ENCODE measurements at regions of chr1 and their contacts with region 1.

Region 1: GRCh38 chr1:67500413-67500959 is 70.3 kb upstream of the SERBP1 start:
- DNase-seq: peak; percentile 89 to 94
- ATAC-seq: peak; percentile 94
- H3K4me3 ChIP-seq: no peak overlapping the region
- H3K27ac ChIP-seq: no peak overlapping the region
- H3K4me1 ChIP-seq: no peaks in the 10 kb centered on the region
- H3K27me3 ChIP-seq: no peaks in the 10 kb centered on the region

Region 2: DNA sequence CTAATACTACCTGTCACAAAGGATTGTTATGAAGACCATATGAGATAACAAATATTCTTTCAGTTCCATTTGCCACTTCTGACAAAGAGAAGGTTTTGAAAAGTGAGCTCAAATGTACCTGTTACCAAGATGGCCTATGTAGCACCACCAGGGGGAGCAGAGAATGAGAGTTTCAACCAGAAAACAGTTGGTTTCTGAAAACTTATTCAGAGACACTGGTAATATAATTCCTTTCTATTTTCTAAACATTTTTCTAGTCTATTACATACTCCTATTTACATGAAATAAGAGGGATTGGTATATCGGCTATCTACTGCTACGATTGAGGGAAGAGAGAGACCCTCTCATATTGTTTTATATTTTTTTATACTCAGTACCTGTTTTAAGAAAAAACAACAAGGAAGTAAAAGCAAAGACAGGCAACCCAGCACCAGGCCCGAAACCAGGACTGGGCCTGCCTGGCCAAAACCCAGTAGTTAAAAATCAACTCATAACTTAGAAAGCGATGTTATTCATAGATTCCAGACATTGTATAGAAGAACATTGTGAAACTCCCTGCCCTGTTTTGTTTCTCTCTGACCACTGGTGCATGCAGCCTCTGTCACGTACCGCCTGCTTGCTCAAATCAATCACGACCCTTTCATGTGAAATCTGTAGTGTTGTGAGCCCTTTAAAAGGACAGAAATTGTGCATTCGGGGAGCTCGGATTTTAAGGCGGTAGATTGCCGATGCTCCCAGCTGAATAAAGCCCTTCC is 285.9 kb before region 1 on chr1:
- intact Hi-C with region 1: loop called in 1 of 2 experiments (anchors 5 kb)
- DNase-seq: no peak
- ATAC-seq: no peak
- H3K4me3 ChIP-seq: no peak overlapping the region
- H3K27ac ChIP-seq: no peak overlapping the region
- H3K4me1 ChIP-seq: no peaks in the 10 kb centered on the region
- H3K27me3 ChIP-seq: no peaks in the 10 kb centered on the region

Region 3: DNA sequence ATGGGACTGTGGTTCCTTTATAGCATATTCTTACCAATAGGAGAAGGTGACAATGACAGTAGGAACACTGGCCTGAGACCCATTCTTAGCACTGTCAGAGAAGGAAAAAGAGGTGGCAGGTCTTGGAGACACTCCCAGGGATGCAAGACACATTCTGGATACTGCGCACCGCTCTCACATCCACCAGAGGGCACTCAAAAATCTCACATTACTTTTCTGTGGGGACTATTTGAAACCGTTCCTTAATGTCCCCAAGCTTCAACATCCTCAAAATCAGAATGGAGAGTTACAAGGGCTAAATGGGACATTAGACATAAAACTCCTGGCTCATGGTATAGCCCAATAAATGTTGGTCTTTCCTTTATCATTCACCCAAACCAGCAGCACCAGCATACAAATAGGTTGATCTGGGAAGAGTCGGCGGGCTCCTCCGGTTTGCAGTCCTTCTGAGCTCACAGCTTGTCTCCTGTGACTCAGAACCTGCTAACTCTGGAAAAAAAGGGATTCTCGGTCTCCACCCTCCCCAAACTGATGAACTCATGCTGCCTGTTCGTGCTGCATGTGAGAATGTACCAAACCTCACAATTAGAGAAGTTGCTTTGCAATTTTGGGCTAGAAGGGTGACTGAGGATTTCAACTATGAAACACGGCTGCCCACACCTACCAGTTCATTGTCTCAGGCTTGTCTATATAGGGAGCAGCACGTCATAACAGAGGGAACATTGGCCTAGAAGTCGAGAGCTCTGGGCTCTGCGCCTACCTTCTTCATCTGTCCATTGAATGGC is 152.6 kb before region 1 on chr1:
- intact Hi-C with region 1: loop called (anchors 1 to 2 kb)
- DNase-seq: no peak
- ATAC-seq: peak; percentile 77
- H3K4me3 ChIP-seq: no peak overlapping the region
- H3K27ac ChIP-seq: no peak overlapping the region
- H3K4me1 ChIP-seq: no peaks in the 10 kb centered on the region
- H3K27me3 ChIP-seq: peaks cover 0 to 1% of the 10 kb centered on the region in 2 donors

Region 4: GRCh38 chr1:67451356-67451755 is 49.1 kb before region 1 on chr1:
- intact Hi-C with region 1: no loop called
- DNase-seq: no peak
- ATAC-seq: no peak
- H3K4me3 ChIP-seq: no peak overlapping the region
- H3K27ac ChIP-seq: no peak overlapping the region
- H3K4me1 ChIP-seq: no peaks in the 10 kb centered on the region
- H3K27me3 ChIP-seq: no peaks in the 10 kb centered on the region